Activated B cell treated with CpG ODN at 0.5 μM for 24 hours (primary cell): ENCODE measurements at regions of chr2 and their contacts with region 1.

Region 1: DNA sequence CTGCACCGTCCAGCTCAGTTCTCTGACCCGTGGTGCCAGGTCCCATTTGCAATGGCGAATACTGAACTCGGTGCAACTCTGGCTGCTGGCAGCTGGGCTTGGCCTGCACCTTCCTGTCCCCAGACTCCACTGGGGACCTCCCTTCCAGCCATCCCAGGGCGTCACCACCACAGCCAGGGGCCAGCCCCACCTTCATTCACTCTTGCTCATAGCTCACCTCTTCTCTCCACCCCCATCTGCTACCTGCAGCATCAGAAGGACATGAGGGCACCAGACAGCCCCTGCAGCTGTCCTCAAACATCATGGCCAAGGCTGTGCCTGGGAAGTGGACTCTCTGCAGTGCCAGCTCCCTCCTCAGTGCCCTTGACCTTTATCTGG is 16.2 kb upstream of the ALPI start:
- DNase-seq: no peak
- ATAC-seq: no peak
- H3K4me3 Mint-ChIP-seq: no peak overlapping the region
- H3K27ac Mint-ChIP-seq: no peak overlapping the region
- H3K4me1 Mint-ChIP-seq: no peaks in the 10 kb centered on the region
- H3K27me3 Mint-ChIP-seq: peaks cover 3% of the 10 kb centered on the region
- CTCF ChIP-seq: no peak

Region 2: GRCh38 chr2:231900972-231901371 is 538.8 kb before region 1 on chr2:
- CTCF ChIA-PET with region 1: interaction called, 7 read pairs
- POLR2A ChIA-PET with region 1: interaction called, 3 read pairs
- intact Hi-C with region 1: loop called (anchors 1 kb)
- DNase-seq: no peak
- ATAC-seq: no peak
- H3K4me3 Mint-ChIP-seq: no peak overlapping the region
- H3K27ac Mint-ChIP-seq: no peak overlapping the region
- H3K4me1 Mint-ChIP-seq: no peaks in the 10 kb centered on the region
- H3K27me3 Mint-ChIP-seq: no peaks in the 10 kb centered on the region
- CTCF ChIP-seq: no peak

Region 3: GRCh38 chr2:231925303-231926179 is 514.2 kb before region 1 on chr2:
- CTCF ChIA-PET with region 1: interaction called, 6 read pairs
- POLR2A ChIA-PET with region 1: no interaction called
- intact Hi-C with region 1: loop called (anchors 1 kb)
- DNase-seq: peak; percentile 71
- ATAC-seq: peak; percentile 70
- H3K4me3 Mint-ChIP-seq: peak overlapping the region; percentile 65
- H3K27ac Mint-ChIP-seq: no peak overlapping the region
- H3K4me1 Mint-ChIP-seq: peaks cover 13% of the 10 kb centered on the region
- H3K27me3 Mint-ChIP-seq: peaks cover 47% of the 10 kb centered on the region
- CTCF ChIP-seq: no peak

Region 4: DNA sequence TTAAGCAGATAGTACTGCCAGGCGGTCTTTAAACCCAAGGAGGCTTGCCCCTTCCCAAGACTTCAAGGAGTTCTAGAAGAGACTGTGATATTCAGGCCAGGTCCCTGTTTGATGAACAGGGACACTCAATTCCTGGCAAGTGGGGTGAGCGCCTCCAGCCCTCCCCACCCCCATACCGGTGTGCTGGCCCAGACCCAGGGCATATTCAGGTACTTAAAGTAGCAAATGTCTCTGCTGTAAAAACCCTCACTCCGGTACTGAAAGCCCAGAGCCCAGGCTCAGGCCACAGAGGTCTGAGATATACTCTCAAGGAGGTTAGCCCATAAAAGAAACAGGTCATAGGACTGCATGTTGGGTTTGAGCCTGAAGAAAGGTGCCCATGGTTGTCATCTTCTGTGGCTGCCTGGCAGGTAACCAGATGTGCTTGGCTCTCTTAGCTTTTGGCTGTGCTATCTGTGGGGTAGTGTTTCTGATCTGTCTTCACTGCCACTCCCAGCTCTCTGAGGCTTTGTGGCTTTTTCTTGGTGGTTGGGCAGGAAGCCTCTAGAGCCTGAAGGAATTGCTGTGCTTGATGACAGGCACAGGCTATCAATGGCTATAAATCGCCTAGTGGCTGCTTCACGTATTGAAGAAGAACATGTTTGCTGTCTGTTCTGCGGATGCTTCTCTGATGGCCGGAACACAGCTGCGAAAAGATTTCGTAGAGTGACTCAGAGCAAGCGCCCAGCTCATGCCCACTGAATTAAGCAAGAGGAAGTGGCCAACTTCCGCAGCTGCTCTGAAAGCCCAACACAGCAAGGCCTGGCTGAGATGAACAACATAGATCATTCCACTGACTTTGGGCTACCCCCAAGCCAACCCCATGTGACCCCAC is 124.5 kb before region 1 on chr2:
- CTCF ChIA-PET with region 1: no interaction called
- POLR2A ChIA-PET with region 1: no interaction called
- intact Hi-C with region 1: loop called (anchors 1 kb)
- DNase-seq: peak; percentile 41
- ATAC-seq: peak; percentile 96
- H3K4me3 Mint-ChIP-seq: peak overlapping the region; percentile 59
- H3K27ac Mint-ChIP-seq: peak overlapping the region; percentile 79
- H3K4me1 Mint-ChIP-seq: peaks cover 30% of the 10 kb centered on the region
- H3K27me3 Mint-ChIP-seq: no peaks in the 10 kb centered on the region
- CTCF ChIP-seq: no peak

Region 5: GRCh38 chr2:232327105-232328041 is 112.4 kb before region 1 on chr2:
- CTCF ChIA-PET with region 1: no interaction called
- POLR2A ChIA-PET with region 1: no interaction called
- intact Hi-C with region 1: loop called (anchors 2 kb)
- DNase-seq: peak; percentile 67
- ATAC-seq: peak; percentile 80
- H3K4me3 Mint-ChIP-seq: no peak overlapping the region
- H3K27ac Mint-ChIP-seq: no peak overlapping the region
- H3K4me1 Mint-ChIP-seq: peaks cover 8% of the 10 kb centered on the region
- H3K27me3 Mint-ChIP-seq: no peaks in the 10 kb centered on the region
- CTCF ChIP-seq: no peak

Region 6: GRCh38 chr2:232487385-232488096 is 47.8 kb after region 1 on chr2 and contains the start of gene ECEL1:
- CTCF ChIA-PET with region 1: no interaction called
- POLR2A ChIA-PET with region 1: no interaction called
- intact Hi-C with region 1: no loop called
- DNase-seq: no peak
- ATAC-seq: no peak
- H3K4me3 Mint-ChIP-seq: peak within 1 kb of the TSS; percentile 44
- H3K27ac Mint-ChIP-seq: no peak within 1 kb of the TSS
- H3K4me1 Mint-ChIP-seq: peaks cover 15% of the 10 kb centered on the region
- H3K27me3 Mint-ChIP-seq: peaks cover 44% of the 10 kb centered on the region
- CTCF ChIP-seq: no peak
- total RNA-seq, gene ECEL1: not detected in 2 replicates

Region 7: GRCh38 chr2:232521959-232522622 is 82.3 kb after region 1 on chr2:
- CTCF ChIA-PET with region 1: no interaction called
- POLR2A ChIA-PET with region 1: no interaction called
- intact Hi-C with region 1: loop called (anchors 2 kb)
- DNase-seq: peak; percentile 79
- ATAC-seq: peak; percentile 65
- H3K4me3 Mint-ChIP-seq: peak overlapping the region; percentile 7
- H3K27ac Mint-ChIP-seq: no peak overlapping the region
- H3K4me1 Mint-ChIP-seq: peaks cover 15% of the 10 kb centered on the region
- H3K27me3 Mint-ChIP-seq: peaks cover 36% of the 10 kb centered on the region
- CTCF ChIP-seq: peak; percentile 56

Region 8: GRCh38 chr2:232592772-232593395 is 153.1 kb after region 1 on chr2:
- CTCF ChIA-PET with region 1: no interaction called
- POLR2A ChIA-PET with region 1: no interaction called
- intact Hi-C with region 1: no loop called
- DNase-seq: no peak
- ATAC-seq: no peak
- H3K4me3 Mint-ChIP-seq: no peak overlapping the region
- H3K27ac Mint-ChIP-seq: no peak overlapping the region
- H3K4me1 Mint-ChIP-seq: no peaks in the 10 kb centered on the region
- H3K27me3 Mint-ChIP-seq: no peaks in the 10 kb centered on the region
- CTCF ChIP-seq: no peak

Region 9: GRCh38 chr2:232951891-232952290 is 512.1 kb after region 1 on chr2:
- CTCF ChIA-PET with region 1: no interaction called
- POLR2A ChIA-PET with region 1: no interaction called
- intact Hi-C with region 1: no loop called
- DNase-seq: no peak
- ATAC-seq: no peak
- H3K4me3 Mint-ChIP-seq: no peak overlapping the region
- H3K27ac Mint-ChIP-seq: no peak overlapping the region
- H3K4me1 Mint-ChIP-seq: peaks cover 27% of the 10 kb centered on the region
- H3K27me3 Mint-ChIP-seq: no peaks in the 10 kb centered on the region
- CTCF ChIP-seq: no peak

Region 10: GRCh38 chr2:233223059-233223894 is 783.5 kb after region 1 on chr2:
- CTCF ChIA-PET with region 1: no interaction called
- POLR2A ChIA-PET with region 1: no interaction called
- intact Hi-C with region 1: no loop called
- DNase-seq: no peak
- ATAC-seq: peak; percentile 88
- H3K4me3 Mint-ChIP-seq: peak overlapping the region; percentile 52
- H3K27ac Mint-ChIP-seq: peak overlapping the region; percentile 76
- H3K4me1 Mint-ChIP-seq: peaks cover 18% of the 10 kb centered on the region
- H3K27me3 Mint-ChIP-seq: no peaks in the 10 kb centered on the region
- CTCF ChIP-seq: no peak